Activated naive CD4-positive, alpha-beta T cell treated with anti-CD3 and anti-CD28 coated beads for 36 hours (primary cell): ENCODE measurements at regions of chr3 and their contacts with region 1.

Region 1: GRCh38 chr3:132416807-132417694 is at the start of gene DNAJC13:
- DNase-seq: peak; percentile 92
- H3K4me3 Mint-ChIP-seq: peak within 1 kb of the TSS; percentile 91
- H3K27ac Mint-ChIP-seq: peak within 1 kb of the TSS; percentile 90
- H3K4me1 Mint-ChIP-seq: peaks cover 22% of the 10 kb centered on the region
- H3K27me3 Mint-ChIP-seq: no peaks in the 10 kb centered on the region
- total RNA-seq, gene DNAJC13: 32.8 to 33.6 TPM

Region 2: GRCh38 chr3:131381444-131382291 is 1035.4 kb before region 1 on chr3 and contains the start of gene NUDT16:
- CTCF ChIA-PET with region 1: no interaction called
- intact Hi-C with region 1: loop called (anchors 1 kb)
- DNase-seq: peak; percentile 97
- H3K4me3 Mint-ChIP-seq: peak within 1 kb of the TSS; percentile 94
- H3K27ac Mint-ChIP-seq: peak within 1 kb of the TSS; percentile 81
- H3K4me1 Mint-ChIP-seq: peaks cover 21% of the 10 kb centered on the region
- H3K27me3 Mint-ChIP-seq: no peaks in the 10 kb centered on the region
- total RNA-seq, gene NUDT16: 4.9 to 5.9 TPM

Region 3: DNA sequence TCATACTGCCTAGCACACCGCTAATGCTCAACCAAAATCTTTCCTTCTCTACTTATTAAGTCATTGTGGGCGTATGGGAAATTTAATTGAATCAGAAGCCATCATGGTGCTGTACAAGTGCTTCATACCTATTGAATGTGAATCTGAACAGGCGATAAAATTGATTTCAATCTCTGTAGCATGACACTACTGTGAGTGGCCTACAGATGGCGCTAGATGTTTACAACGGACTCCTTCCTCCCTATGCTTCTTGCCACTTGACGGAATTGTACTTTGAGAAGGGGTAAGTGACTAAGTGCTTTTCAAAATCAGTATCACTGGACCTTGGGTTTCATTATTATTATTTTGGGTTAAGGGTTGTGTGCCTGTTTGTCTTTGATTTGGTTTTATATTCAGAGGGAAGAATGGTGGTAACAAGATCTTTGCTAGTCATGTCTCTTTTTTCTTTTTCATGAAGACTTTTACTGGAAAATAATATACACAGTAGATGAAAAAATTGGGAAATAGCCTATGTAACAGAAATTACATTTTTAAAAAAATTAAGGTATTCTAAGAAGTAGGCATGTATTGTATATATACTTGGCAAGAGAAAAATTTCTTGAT is 64.4 kb before region 1 on chr3:
- CTCF ChIA-PET with region 1: interaction called, 3 read pairs
- intact Hi-C with region 1: loop called (anchors 1 kb)
- DNase-seq: peak; percentile 84
- H3K4me3 Mint-ChIP-seq: no peak overlapping the region
- H3K27ac Mint-ChIP-seq: no peak overlapping the region
- H3K4me1 Mint-ChIP-seq: peaks cover 2% of the 10 kb centered on the region
- H3K27me3 Mint-ChIP-seq: no peaks in the 10 kb centered on the region

Region 4: DNA sequence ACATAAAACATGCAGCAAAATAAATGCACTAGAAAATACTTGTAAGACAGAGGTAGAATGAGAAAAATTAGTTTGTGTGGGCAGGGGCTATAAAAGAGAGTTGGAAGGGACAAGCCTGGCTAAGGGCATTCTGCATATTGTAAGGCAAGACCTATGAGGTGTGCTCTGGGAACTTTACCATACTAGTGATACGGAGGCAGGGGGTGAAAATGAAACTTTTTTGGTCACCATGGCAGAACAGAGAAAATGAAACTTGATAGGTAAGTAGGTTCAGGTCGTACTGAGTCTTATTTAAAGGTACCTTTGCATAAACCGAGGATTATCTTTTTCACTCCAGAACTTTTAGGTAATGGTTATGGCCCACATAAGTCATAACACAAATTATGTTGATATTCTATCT is 105.3 kb after region 1 on chr3:
- CTCF ChIA-PET with region 1: no interaction called
- intact Hi-C with region 1: loop called (anchors 5 kb)
- DNase-seq: peak; percentile 7
- H3K4me3 Mint-ChIP-seq: no peak overlapping the region
- H3K27ac Mint-ChIP-seq: no peak overlapping the region
- H3K4me1 Mint-ChIP-seq: peaks cover 6% of the 10 kb centered on the region
- H3K27me3 Mint-ChIP-seq: no peaks in the 10 kb centered on the region

Region 5: GRCh38 chr3:132659365-132660051 is 242.5 kb after region 1 on chr3 and contains the start of gene ACAD11:
- CTCF ChIA-PET with region 1: no interaction called
- intact Hi-C with region 1: loop called (anchors 1 kb)
- DNase-seq: peak; percentile 64
- H3K4me3 Mint-ChIP-seq: peak within 1 kb of the TSS; percentile 95
- H3K27ac Mint-ChIP-seq: peak within 1 kb of the TSS; percentile 94
- H3K4me1 Mint-ChIP-seq: peaks cover 44% of the 10 kb centered on the region
- H3K27me3 Mint-ChIP-seq: no peaks in the 10 kb centered on the region
- total RNA-seq, gene ACAD11: 11.2 to 11.4 TPM

Region 6: DNA sequence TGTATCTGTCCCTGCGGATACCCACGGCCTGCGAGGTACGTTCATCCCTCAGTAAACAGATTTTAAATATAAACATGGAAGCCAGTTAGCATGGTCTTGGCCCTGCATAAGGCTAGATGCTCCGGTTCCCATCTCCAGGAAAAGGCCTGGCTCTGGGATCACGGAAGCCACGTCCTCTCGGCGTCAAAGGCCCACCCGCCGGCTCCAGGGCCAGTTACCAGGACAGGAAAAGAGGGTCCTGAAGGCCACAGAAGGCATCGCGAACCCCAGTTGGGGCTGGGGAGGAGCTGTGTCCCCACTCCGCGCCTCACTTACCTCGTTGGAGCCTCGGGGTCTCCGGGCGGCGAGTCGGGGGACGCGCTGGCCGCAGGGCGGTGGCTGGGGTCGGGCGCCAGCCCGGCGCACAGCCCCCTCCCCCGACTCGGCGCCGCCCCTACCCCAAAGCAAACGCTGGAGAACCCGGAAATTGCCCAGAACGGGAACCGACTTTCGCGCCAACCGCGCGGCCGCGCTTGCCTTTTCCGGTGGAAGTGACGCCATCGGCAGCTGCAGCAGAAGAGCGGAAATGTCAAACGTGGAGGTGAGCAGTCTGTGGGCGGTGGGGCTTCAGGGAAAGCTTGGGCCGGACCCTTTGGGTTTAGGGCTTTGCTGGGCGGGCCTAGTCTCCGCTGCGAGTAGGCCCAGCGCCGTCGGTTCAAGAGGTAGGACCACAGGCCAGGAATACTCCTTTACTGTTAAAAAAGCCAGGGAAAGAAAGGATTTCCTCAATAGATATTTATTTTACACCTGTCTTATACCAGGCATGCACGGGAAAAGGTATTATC is 1244.6 kb after region 1 on chr3 and contains the start of gene TOPBP1:
- CTCF ChIA-PET with region 1: no interaction called
- intact Hi-C with region 1: loop called (anchors 5 kb)
- DNase-seq: peak; percentile 94
- H3K4me3 Mint-ChIP-seq: peak within 1 kb of the TSS; percentile 98
- H3K27ac Mint-ChIP-seq: peak within 1 kb of the TSS; percentile 98
- H3K4me1 Mint-ChIP-seq: peaks cover 28% of the 10 kb centered on the region
- H3K27me3 Mint-ChIP-seq: no peaks in the 10 kb centered on the region
- total RNA-seq, gene TOPBP1: 65.4 to 65.8 TPM